ENCODE measurements at regions of chr4 and their contacts with region 1.

Region 1: DNA sequence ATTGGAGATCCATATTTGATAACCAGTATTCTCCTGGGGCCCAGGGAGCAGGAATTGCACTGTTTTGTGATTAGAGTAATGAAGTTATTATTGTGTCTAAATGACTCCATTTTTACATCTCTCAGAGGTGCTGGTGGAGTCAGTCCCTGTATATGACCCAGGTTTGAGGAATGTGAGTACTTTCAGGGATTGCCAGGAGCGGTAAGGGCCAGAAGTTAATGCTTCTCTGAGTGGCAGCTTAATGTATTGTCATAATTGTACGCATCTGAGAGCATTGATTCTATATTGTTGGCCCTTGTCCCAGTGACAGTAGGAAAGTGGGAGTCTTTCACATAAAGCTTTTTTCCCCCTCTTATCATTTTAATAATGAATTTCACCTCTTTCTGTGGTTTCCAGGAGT is 146.2 kb downstream of the GATB start:
- DNase-seq: no peak
- H3K4me3 ChIP-seq: no peak overlapping the region
- CTCF ChIP-seq: no peak

Region 2: DNA sequence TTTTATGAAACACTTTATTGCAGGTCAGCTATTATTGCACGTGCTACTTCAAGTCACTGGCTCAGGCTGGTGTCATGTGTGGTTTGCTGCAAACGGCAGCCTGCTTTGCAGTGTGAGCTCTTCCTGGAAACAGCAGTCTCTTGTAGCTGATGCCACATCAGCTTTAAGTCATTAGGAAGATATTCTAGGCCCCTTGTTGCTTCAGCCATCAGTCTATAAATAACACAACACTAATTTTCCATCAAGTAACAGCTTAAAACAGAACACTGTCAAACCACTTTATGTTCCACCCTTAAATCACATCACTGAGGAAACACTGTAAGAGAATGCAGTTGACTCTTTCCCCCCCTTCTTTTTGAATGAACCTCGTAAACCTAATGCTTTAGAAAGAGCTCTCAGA is 52.5 kb after region 1 on chr4:
- in situ Hi-C with region 1: no loop called
- DNase-seq: no peak
- H3K4me3 ChIP-seq: no peak overlapping the region
- CTCF ChIP-seq: no peak

Region 3: DNA sequence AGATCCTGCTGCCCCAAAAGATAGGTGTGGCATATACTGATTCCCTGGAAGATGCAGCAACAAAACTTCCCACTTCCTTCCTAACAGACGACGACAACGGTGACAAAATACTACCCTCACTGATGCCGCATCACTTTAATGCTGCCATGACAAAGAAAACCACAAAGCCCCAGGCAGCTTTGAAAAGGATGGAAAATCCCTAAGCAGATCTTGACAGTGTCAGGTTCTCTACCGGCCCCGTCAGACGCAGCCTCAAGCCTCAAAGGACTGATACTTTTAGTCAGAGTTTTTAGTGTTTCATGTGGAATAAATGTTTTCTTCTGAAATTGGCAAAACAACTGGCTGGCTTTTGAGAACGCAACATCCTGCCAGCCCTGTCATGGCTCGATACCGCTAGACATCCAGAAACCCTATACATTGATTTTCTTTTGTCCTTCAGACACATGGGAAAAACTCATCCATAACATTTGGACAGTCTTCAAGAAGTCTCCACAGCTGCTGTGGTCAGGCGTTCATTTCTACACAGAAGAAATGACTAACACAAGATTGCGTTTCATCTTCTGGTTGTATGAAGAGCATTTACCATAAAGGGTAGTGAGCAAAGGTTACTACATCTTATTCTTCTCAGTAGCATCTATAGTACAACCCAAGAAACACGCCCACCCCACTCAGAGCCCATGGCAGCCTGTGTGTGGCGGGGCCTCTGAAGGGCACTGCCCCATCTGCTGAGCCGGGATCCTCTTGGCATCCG is 86.2 kb after region 1 on chr4:
- in situ Hi-C with region 1: loop called (anchors 5 kb)
- DNase-seq: no peak
- H3K4me3 ChIP-seq: no peak overlapping the region
- CTCF ChIP-seq: no peak

Measured in astrocyte of the cerebellum (primary cell).